Sigmoid colon (tissue), 7 donors: ENCODE measurements at regions of chr2 and their contacts with region 1.

Region 1: DNA sequence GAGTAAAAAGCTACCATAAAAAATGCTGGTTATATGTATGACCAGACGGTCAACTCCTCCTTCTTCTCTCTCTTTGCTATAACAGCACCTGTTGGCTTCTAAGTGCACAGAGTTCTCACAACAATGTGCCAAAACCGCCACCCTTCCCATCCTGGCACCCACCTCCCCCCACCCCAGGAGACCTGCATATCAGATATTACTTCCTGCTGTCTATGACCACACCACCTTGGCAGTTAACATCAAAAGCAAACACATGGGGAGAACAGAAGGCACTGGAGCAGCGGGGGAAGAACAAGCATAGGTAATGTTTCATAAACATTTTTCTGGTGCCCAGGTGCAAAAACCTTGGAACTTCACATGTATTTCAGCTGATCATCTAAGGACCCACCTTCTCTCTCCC is 15.5 kb downstream of the SPRED2 start:
- DNase-seq: no peak
- H3K4me3 ChIP-seq: no peak overlapping the region
- H3K27ac ChIP-seq: no peak overlapping the region
- H3K4me1 ChIP-seq: peaks cover 0 to 8% (median 6%) of the 10 kb centered on the region in 4 donors
- H3K27me3 ChIP-seq: no peaks in the 10 kb centered on the region
- CTCF ChIP-seq: no peak
- EP300 ChIP-seq: no peak
- POLR2A ChIP-seq: no peak

Region 2: DNA sequence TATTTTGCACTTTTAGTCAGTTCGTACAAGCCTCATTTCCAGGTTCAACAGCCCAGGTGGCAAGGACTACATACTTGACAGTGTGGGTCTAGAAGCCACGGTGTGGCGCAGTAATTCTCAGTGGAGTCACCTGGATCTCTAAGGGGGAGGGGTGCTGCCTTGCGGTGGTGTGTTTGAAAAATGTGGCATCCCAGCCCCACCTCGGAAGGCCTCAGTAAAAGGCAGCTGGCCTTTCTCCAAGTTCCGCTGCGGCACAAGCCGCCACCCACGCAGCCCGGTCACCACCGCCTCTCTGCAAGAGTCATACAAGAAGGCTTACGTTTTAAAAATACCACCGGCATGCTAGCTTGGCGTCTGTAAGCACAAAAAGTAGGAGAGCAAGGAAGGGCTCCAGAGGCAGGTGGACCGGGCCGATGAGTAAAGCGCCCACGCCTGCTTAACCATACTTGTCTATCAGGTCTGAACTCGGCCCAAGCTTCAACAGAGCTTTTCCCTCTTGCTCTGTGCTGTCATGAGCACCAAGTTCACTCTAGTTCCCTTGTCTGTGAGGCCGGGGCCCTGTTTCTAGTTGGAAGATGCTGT is 34.1 kb before region 1 on chr2:
- intact Hi-C with region 1: loop called (anchors 5 kb)
- DNase-seq: peak; percentile 85
- H3K4me3 ChIP-seq: peak overlapping the region in 3 of 4 donors; percentile 4 to 26 (median 23)
- H3K27ac ChIP-seq: peak overlapping the region; percentile 24 to 70 (median 62)
- H3K4me1 ChIP-seq: peaks cover 0 to 29% (median 25%) of the 10 kb centered on the region in 4 donors
- H3K27me3 ChIP-seq: no peaks in the 10 kb centered on the region
- CTCF ChIP-seq: no peak
- EP300 ChIP-seq: no peak
- POLR2A ChIP-seq: no peak

Region 3: DNA sequence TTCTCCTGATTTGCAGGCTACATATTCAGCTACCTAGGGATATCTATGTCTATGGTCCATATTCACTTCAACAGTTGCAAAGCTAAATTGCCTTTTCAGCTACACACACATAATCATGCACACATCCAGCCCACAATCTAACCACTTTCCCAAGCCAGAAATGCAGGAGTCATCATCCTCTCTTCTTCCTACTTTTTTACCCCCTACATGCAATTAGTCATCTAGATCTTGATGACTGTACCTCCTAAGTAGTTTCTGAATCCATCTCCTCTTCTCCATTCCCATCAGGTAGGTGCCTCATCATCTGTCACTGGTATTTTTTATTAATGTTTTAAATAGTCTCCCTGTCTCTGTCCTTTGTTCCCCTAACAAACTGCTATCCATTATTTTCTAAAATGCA is 39.1 kb after region 1 on chr2:
- intact Hi-C with region 1: no loop called
- DNase-seq: no peak
- H3K4me3 ChIP-seq: no peak overlapping the region
- H3K27ac ChIP-seq: no peak overlapping the region
- H3K4me1 ChIP-seq: no peaks in the 10 kb centered on the region
- H3K27me3 ChIP-seq: no peaks in the 10 kb centered on the region
- CTCF ChIP-seq: no peak
- EP300 ChIP-seq: no peak
- POLR2A ChIP-seq: no peak